Activated T-helper 1 cell treated with anti-CD3 and anti-CD28 coated beads, Interleukin-12 subunit alpha, Interleukin-12 subunit beta, Interleukin-2, Interleukin-4 antibody, amounts not matched to agents 30 ng/mL and 10 ng/mL and 1 ng/mL, durations not matched to agents 14 hours and 24 hours and 36 hours (primary cell): ENCODE measurements at regions of chr18 and their contacts with region 1.

Region 1: DNA sequence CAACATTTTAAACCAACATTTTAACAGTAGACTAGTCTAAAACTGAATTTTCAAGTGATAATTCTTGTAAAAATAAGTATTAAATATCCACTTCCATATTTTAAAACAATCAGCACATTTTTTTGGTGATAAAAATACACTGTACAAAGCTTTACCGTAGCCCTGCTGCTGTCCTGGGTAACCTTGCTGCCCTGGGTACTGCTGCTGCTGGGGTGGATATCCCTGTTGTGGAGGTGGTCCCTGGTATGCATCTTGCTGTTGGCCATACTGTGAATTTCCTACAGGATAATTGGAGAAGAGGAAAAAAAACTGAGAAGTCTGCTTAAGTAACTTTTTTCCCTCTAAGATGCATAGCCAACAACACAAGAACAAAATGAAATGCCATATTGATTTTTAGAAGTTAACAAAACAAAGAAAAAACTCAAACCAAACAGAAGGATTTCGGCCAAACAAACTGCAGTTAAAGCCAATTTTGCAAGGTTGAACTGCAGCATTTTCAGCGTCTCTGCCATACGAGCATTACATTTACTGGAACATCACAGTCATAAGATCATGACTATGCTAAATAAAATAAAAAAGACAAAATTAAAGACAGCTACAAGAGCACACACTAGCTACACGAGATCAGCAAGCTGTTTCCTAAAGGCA is 55.4 kb downstream of the SS18 start:
- DNase-seq: no peak
- H3K4me3 Mint-ChIP-seq: no peak overlapping the region
- H3K27ac Mint-ChIP-seq: no peak overlapping the region
- H3K4me1 Mint-ChIP-seq: no peaks in the 10 kb centered on the region
- H3K27me3 Mint-ChIP-seq: no peaks in the 10 kb centered on the region

Region 2: GRCh38 chr18:25935356-25935755 is 99.6 kb before region 1 on chr18:
- intact Hi-C with region 1: no loop called
- DNase-seq: no peak
- H3K4me3 Mint-ChIP-seq: no peak overlapping the region
- H3K27ac Mint-ChIP-seq: no peak overlapping the region
- H3K4me1 Mint-ChIP-seq: no peaks in the 10 kb centered on the region
- H3K27me3 Mint-ChIP-seq: peaks cover 12% of the 10 kb centered on the region

Region 3: DNA sequence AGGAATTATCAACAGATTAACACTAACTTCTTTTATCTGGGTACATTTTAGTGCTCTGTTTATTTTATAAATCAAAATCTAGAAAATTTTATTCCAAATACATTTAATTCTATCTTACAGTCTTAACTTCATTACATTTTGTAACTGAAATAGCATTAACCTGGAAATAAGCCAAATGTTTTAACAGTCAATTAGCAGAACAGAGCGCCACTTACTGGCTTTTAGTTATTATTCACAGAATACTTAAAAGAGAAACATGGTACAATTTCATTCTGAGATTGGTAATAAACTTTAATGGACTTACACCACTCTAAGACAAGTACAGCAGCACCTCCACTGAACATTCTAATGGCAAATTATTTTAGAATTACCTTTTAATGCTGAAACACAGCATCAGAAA is 16.9 kb after region 1 on chr18:
- intact Hi-C with region 1: loop called (anchors 2 kb)
- DNase-seq: no peak
- H3K4me3 Mint-ChIP-seq: no peak overlapping the region
- H3K27ac Mint-ChIP-seq: no peak overlapping the region
- H3K4me1 Mint-ChIP-seq: peaks cover 10% of the 10 kb centered on the region
- H3K27me3 Mint-ChIP-seq: no peaks in the 10 kb centered on the region